AG04449 (cell line): ENCODE measurements at regions of chr16 and their contacts with region 1.

Region 1: DNA sequence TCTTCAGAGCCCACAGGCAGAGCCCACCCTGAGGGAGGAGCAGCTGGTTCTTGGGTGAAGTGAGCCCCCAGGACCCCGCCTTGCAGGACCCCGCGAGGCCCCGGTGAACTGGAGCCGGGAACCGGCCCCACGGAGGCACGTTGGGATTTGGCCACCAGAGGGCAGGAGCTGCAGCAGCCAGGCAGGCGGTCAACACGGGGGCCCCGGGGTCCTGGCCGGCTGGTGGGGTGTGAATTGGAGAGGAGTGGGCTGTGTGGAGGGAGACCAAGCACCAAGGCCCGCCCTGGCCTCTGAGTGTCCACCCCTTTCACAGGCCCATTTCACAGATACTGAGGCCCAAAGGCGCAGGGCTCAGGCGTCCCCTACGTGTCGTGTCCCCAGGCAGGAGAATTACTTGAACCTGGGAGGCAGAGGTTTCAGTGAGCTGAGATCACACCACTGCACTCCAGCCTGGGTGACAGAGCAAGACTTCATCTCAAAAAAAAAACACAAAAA is 2.2 kb downstream of the DPEP1 start:
- DNase-seq: no peak
- H3K4me3 ChIP-seq: no peak overlapping the region
- CTCF ChIP-seq: peak; percentile 75

Region 2: GRCh38 chr16:89602273-89602951 is 13.2 kb before region 1 on chr16:
- CTCF ChIA-PET with region 1: interaction called, 20 read pairs
- POLR2A ChIA-PET with region 1: interaction called, 3 read pairs
- DNase-seq: no peak
- H3K4me3 ChIP-seq: peak overlapping the region; percentile 32
- CTCF ChIP-seq: no peak

Region 3: DNA sequence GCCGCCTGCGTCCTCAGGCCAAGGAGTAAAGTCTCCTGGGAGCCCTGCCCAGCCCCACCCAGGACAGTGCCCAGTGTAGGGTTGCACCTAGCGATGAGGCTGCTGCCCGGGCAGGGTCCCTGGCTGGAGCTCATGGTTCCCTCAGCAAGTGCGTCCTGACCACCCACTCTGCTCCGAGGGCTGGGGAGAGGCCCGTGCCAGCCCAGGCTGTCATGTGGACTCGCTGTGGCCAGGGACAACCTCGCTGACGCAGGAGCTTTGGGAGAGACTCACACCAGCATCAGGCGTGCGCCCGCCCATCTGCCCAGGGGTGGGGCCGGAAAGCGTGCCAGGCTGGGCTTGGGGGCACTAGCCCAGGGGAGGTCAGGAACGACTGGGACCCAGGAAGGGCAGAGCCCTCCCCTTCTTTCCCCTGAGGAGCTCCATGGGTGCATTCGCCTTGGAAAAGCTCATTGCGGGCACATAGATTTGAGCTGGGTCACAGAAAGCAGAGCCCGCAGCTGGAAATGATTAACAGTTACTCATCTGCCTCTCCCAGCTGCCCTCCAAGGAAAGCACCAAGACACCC is 17.5 kb after region 1 on chr16:
- CTCF ChIA-PET with region 1: interaction called, 19 read pairs
- POLR2A ChIA-PET with region 1: no interaction called
- DNase-seq: peak; percentile 31
- H3K4me3 ChIP-seq: no peak overlapping the region
- CTCF ChIP-seq: no peak